A673 (cell line): ENCODE measurements at regions of chr4 and their contacts with region 1.

Region 1: DNA sequence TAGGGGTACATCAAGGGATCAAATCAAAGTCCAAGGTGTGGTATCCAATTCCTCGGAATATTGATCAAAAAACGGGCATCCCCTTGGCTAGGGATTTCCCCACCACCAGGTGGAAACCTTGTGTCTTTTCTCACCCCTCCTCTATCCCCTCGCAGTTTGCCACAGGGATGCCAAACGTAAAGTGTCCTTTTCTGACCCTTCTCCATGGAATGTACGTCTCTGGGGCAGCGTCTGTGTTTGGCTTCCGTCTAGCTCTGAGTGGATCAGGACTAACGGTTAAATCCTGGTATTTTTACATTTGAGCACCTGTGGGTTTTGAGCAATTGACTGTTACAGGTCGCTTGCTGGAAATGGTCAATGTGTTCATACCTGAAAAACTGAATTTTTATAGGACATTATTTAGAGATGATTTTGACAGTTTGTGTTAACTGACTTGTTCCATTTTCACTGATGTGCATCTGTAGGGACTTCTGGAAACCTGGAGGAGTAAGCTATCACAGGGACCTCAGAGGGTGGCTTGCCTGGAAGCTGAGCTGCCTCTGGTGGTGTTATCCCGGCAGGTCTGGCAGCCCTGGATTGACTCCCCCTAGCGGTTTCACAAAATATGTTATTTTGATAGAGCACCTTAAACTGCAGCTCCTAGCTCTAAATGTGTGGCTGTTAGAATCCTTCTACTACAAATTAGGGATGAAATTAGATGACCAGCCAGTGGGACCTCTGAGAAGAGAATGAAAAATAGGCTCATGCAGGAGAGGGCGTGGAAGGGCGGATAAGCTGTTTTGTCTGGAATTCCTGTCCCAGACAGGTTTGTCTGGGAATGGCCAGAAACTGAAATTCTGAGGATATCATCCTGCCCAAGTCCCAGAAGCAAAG is 8.8 kb upstream of the MGST2 start:
- DNase-seq: peak; percentile 83
- H3K4me3 ChIP-seq: no peak overlapping the region
- H3K27ac ChIP-seq: no peak overlapping the region
- H3K4me1 ChIP-seq: no peaks in the 10 kb centered on the region
- H3K27me3 ChIP-seq: no peaks in the 10 kb centered on the region
- CTCF ChIP-seq: peak; percentile 84

Region 2: GRCh38 chr4:138674209-138674608 is 982.6 kb before region 1 on chr4:
- CTCF ChIA-PET with region 1: no interaction called
- POLR2A ChIA-PET with region 1: interaction called, 12 read pairs
- intact Hi-C with region 1: no loop called
- DNase-seq: no peak
- H3K4me3 ChIP-seq: no peak overlapping the region
- H3K27ac ChIP-seq: no peak overlapping the region
- H3K4me1 ChIP-seq: no peaks in the 10 kb centered on the region
- H3K27me3 ChIP-seq: no peaks in the 10 kb centered on the region
- CTCF ChIP-seq: no peak

Region 3: DNA sequence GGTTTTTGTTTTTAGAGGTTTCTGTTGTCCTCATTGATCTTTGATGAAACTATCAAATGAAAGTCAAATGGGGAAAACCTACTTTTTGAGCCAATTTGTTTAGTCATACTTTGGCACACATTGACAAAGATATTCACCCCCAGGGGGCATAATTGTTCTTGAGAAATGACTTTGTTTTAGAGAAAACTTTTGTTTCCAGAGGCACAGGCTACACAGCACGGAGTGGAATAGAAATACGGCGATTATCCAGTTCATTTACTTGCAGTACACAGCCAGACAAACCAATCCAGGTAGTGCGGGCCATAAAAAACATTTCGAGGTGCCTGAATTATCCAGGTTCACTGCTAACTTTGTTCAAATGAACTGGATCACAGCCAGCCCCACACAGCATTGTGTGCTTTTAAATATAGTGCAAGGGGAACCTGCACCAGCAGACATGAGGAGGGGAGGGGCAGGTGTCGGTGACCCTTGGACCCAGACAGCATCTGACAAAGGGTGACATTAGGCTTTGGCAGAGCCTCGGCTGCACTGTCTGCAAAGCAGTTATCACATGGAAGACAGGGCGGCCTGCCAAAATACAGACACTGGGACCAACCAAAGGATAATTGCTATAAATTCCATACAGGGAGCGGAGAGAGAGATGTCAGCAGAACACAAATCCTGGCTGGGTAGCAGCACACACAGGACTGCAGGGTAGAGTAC is 820.9 kb before region 1 on chr4:
- CTCF ChIA-PET with region 1: no interaction called
- POLR2A ChIA-PET with region 1: no interaction called
- intact Hi-C with region 1: no loop called
- DNase-seq: peak; percentile 21
- H3K4me3 ChIP-seq: no peak overlapping the region
- H3K27ac ChIP-seq: no peak overlapping the region
- H3K4me1 ChIP-seq: no peaks in the 10 kb centered on the region
- H3K27me3 ChIP-seq: no peaks in the 10 kb centered on the region
- CTCF ChIP-seq: no peak; the same call in 1 of the 2 replicates

Region 4: GRCh38 chr4:139501927-139502899 is 154.6 kb before region 1 on chr4:
- CTCF ChIA-PET with region 1: no interaction called
- POLR2A ChIA-PET with region 1: no interaction called
- intact Hi-C with region 1: loop called (anchors 5 kb)
- DNase-seq: no peak
- H3K4me3 ChIP-seq: no peak overlapping the region
- H3K27ac ChIP-seq: no peak overlapping the region
- H3K4me1 ChIP-seq: peaks cover 6% of the 10 kb centered on the region
- H3K27me3 ChIP-seq: no peaks in the 10 kb centered on the region
- CTCF ChIP-seq: no peak

Region 5: GRCh38 chr4:140252742-140253555 is 596.1 kb after region 1 on chr4:
- CTCF ChIA-PET with region 1: interaction called, 4 read pairs
- POLR2A ChIA-PET with region 1: no interaction called
- intact Hi-C with region 1: loop called (anchors 5 kb)
- DNase-seq: peak; percentile 76
- H3K4me3 ChIP-seq: peak overlapping the region; percentile 60
- H3K27ac ChIP-seq: peak overlapping the region; percentile 81
- H3K4me1 ChIP-seq: peaks cover 13% of the 10 kb centered on the region
- H3K27me3 ChIP-seq: no peaks in the 10 kb centered on the region
- CTCF ChIP-seq: peak; percentile 88